CD4-positive, alpha-beta T cell (primary cell): ENCODE measurements at regions of chr1 and their contacts with region 1.

Region 1: GRCh38 chr1:39204441-39205081 is at the start of gene MACF1:
- DNase-seq: peak in 7 of 14 experiments; percentile 34 to 75 (median 49)
- ATAC-seq: peak; percentile 58
- H3K4me3 ChIP-seq: peak within 1 kb of the TSS; percentile 56
- H3K4me3 Mint-ChIP-seq: peak within 1 kb of the TSS; percentile 93
- H3K27ac ChIP-seq: peak within 1 kb of the TSS; percentile 52 to 70
- H3K27ac Mint-ChIP-seq: peak within 1 kb of the TSS; percentile 90
- H3K4me1 ChIP-seq: peaks cover 27% of the 10 kb centered on the region
- H3K4me1 Mint-ChIP-seq: peaks cover 64% of the 10 kb centered on the region
- H3K27me3 ChIP-seq: no peaks in the 10 kb centered on the region
- H3K27me3 Mint-ChIP-seq: no peaks in the 10 kb centered on the region
- CTCF ChIP-seq: no peak
- total RNA-seq, gene MACF1: 248 to 252 TPM

Region 2: DNA sequence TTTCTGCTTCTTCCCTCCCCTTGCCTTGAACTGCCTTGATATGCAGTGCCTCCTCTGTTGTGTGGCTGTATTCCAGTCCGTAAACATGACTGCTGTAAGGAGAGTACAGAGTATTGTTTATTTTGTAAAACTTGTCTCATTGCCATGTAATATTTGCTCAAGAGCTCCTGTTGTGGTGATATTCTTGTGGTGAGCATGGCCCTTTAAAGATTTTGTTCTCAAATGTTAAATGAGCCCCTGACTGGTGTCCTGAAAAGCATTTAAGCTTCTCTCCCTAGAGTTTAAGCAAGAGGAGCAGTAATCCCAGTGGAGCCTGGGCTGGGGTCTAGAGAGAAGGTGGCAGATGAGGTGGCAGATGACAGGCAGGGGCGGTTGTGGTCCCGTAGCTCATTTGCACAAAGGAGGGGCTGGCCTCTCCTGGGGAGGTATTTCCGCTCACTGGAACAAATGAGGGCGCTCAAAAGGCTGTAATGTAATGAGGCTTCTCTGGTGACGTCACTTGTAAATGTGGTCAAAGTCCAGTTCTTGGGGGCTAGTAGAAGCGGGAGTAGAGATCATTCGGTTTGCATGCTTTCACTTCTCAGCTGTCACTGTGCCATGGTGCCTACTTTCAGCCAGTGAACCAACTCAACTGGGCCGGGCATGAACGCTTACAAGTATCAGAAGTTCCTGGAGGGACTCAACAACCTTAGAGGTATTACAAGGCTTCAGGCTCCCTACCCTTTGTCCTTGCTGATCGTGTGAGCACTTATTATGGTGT is 46.1 kb before region 1 on chr1:
- CTCF ChIA-PET with region 1: no interaction called
- POLR2A ChIA-PET with region 1: no interaction called
- intact Hi-C with region 1: no loop called
- DNase-seq: no peak
- ATAC-seq: no peak
- H3K4me3 ChIP-seq: no peak overlapping the region
- H3K4me3 Mint-ChIP-seq: no peak overlapping the region
- H3K27ac ChIP-seq: no peak overlapping the region
- H3K27ac Mint-ChIP-seq: no peak overlapping the region
- H3K4me1 ChIP-seq: no peaks in the 10 kb centered on the region
- H3K4me1 Mint-ChIP-seq: no peaks in the 10 kb centered on the region
- H3K27me3 ChIP-seq: no peaks in the 10 kb centered on the region
- H3K27me3 Mint-ChIP-seq: no peaks in the 10 kb centered on the region
- CTCF ChIP-seq: no peak

Region 3: GRCh38 chr1:39214998-39215873 is 10.7 kb after region 1 on chr1:
- CTCF ChIA-PET with region 1: interaction called, 28 read pairs
- POLR2A ChIA-PET with region 1: interaction called, 70 read pairs
- intact Hi-C with region 1: loop called in 1 of 2 experiments (anchors 1 kb)
- DNase-seq: peak in 10 of 14 experiments; percentile 17 to 73 (median 32)
- ATAC-seq: peak; percentile 74
- H3K4me3 ChIP-seq: peak overlapping the region; percentile 62
- H3K4me3 Mint-ChIP-seq: peak overlapping the region; percentile 89
- H3K27ac ChIP-seq: peak overlapping the region; percentile 52 to 77
- H3K27ac Mint-ChIP-seq: peak overlapping the region; percentile 89
- H3K4me1 ChIP-seq: peaks cover 43% of the 10 kb centered on the region
- H3K4me1 Mint-ChIP-seq: peaks cover 59% of the 10 kb centered on the region
- H3K27me3 ChIP-seq: no peaks in the 10 kb centered on the region
- H3K27me3 Mint-ChIP-seq: no peaks in the 10 kb centered on the region
- CTCF ChIP-seq: no peak

Region 4: GRCh38 chr1:39230261-39231190 is 26.0 kb after region 1 on chr1:
- CTCF ChIA-PET with region 1: interaction called, 10 read pairs
- POLR2A ChIA-PET with region 1: interaction called, 3 read pairs
- intact Hi-C with region 1: no loop called
- DNase-seq: peak in 9 of 14 experiments; percentile 5 to 57 (median 37)
- ATAC-seq: peak; percentile 61
- H3K4me3 ChIP-seq: no peak overlapping the region
- H3K4me3 Mint-ChIP-seq: peak overlapping the region; percentile 64
- H3K27ac ChIP-seq: peak overlapping the region; percentile 6 to 44
- H3K27ac Mint-ChIP-seq: peak overlapping the region; percentile 89
- H3K4me1 ChIP-seq: peaks cover 44% of the 10 kb centered on the region
- H3K4me1 Mint-ChIP-seq: peaks cover 60% of the 10 kb centered on the region
- H3K27me3 ChIP-seq: no peaks in the 10 kb centered on the region
- H3K27me3 Mint-ChIP-seq: no peaks in the 10 kb centered on the region
- CTCF ChIP-seq: no peak

Region 5: DNA sequence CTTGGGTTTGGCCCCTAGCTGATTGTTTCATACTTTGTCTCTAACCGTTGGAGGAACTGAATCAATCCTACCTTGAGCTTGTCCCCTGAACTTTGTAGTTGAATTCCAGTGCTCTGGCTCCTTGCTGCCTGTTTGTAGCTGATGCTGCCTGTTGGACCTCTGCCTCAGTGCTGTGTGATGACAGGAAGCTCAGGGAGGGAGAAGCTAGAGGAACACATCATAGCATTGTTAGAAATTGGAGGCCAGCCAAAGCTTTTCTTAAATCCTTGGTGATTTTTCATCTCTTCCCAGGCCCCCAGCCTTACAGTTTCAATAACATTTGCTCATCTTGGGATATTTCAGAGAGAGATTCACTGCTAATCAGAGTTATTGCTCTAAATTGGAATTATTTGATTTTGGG is 33.9 kb after region 1 on chr1:
- CTCF ChIA-PET with region 1: interaction called, 3 read pairs
- POLR2A ChIA-PET with region 1: interaction called, 10 read pairs
- intact Hi-C with region 1: no loop called
- DNase-seq: no peak
- ATAC-seq: no peak
- H3K4me3 ChIP-seq: no peak overlapping the region
- H3K4me3 Mint-ChIP-seq: no peak overlapping the region
- H3K27ac ChIP-seq: no peak overlapping the region
- H3K27ac Mint-ChIP-seq: peak overlapping the region; percentile 75
- H3K4me1 ChIP-seq: peaks cover 22% of the 10 kb centered on the region
- H3K4me1 Mint-ChIP-seq: peaks cover 54% of the 10 kb centered on the region
- H3K27me3 ChIP-seq: no peaks in the 10 kb centered on the region
- H3K27me3 Mint-ChIP-seq: no peaks in the 10 kb centered on the region
- CTCF ChIP-seq: no peak

Region 6: DNA sequence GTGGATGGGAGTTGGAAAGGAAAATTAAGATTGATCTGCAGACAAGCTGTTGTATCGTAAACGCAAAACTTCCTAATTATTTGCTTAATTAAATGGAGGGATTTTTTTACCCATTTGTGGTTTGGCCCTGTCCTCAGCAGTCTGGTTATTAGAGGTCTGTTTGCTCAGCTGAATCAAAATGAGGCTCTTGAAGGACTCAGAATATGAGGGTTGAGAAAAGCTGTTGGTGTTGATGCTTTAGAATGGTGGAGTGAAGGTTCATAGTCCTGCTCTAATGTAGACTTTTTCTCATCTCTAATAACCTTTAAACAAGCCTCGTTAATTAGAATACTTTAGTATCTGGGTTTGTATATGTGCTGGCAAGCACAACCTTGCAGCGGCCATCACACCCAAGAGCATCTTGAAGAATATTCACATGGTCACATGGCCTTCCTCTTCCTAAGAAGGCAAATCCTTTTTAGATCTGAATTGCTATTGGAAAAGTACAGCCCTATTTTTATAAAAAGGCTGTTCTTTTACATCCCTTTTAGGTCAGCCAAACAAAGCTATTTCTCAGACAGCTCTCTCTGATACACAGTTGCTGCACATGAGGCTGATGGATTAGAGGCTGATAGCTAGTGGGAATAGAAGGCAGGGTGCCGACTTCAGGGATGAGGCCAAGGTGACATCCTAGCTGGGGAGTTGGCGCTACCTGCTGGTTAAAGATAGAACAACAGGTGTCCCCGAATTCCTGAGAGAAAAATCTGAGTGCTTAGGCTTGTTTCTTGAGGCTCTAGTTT is 53.8 kb after region 1 on chr1:
- CTCF ChIA-PET with region 1: interaction called, 19 read pairs
- POLR2A ChIA-PET with region 1: interaction called, 13 read pairs
- intact Hi-C with region 1: no loop called
- DNase-seq: peak; percentile 38 to 83 (median 62)
- ATAC-seq: peak; percentile 78
- H3K4me3 ChIP-seq: no peak overlapping the region
- H3K4me3 Mint-ChIP-seq: no peak overlapping the region
- H3K27ac ChIP-seq: peak overlapping the region; percentile 13 to 38
- H3K27ac Mint-ChIP-seq: peak overlapping the region; percentile 83
- H3K4me1 ChIP-seq: peaks cover 14% of the 10 kb centered on the region
- H3K4me1 Mint-ChIP-seq: peaks cover 43% of the 10 kb centered on the region
- H3K27me3 ChIP-seq: no peaks in the 10 kb centered on the region
- H3K27me3 Mint-ChIP-seq: no peaks in the 10 kb centered on the region
- CTCF ChIP-seq: peak; percentile 88

Region 7: GRCh38 chr1:40592107-40592803 is 1387.7 kb after region 1 on chr1:
- CTCF ChIA-PET with region 1: no interaction called
- POLR2A ChIA-PET with region 1: no interaction called
- intact Hi-C with region 1: no loop called
- DNase-seq: peak in 4 of 14 experiments; percentile 5 to 51 (median 38)
- ATAC-seq: no peak
- H3K4me3 ChIP-seq: no peak overlapping the region
- H3K4me3 Mint-ChIP-seq: no peak overlapping the region
- H3K27ac ChIP-seq: no peak overlapping the region
- H3K27ac Mint-ChIP-seq: no peak overlapping the region
- H3K4me1 ChIP-seq: no peaks in the 10 kb centered on the region
- H3K4me1 Mint-ChIP-seq: peaks cover 6% of the 10 kb centered on the region
- H3K27me3 ChIP-seq: peaks cover 0 to 2% of the 10 kb centered on the region in 2 experiments
- H3K27me3 Mint-ChIP-seq: peaks cover 7% of the 10 kb centered on the region
- CTCF ChIP-seq: no peak